HEK293T (cell line): ENCODE measurements at regions of chr5 and their contacts with region 1.

Region 1: DNA sequence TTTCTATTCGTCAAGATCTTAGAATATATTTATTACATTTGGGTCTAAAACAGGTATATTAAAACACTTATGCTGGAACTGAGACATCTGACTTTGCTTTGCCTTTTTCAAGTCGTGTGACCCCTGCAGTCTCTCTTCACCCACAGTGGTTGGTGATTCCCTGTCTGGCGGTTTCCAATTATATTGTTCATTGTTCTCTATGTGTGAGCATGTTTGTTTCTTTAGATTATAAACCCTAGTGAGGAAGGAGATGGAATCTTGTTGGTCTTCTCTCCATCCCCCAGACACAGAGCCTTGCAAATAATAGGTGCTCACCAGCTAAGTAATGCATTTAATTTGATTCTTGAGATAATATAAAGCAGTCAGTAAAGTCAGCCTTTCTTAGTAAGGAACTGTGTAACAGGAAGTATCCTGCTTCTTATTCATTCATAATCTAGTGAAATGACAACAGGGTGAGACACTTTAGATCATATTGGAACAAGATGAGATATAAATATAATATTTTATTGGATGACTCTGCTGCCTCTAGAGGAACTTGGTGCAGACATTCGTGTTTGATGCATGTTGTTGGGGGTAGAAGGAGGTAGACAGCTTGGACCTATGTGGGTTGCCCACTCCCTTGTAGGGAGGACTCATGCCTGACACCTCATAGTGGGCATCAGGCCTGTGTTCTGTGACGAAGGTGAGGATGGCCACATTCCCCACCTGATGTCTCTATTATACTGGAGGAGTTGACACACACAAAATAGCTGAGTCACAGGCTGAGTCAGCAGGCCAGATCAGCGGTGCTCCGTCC is 88.1 kb downstream of the FGF1 start:
- DNase-seq: peak; percentile 13

Region 2: DNA sequence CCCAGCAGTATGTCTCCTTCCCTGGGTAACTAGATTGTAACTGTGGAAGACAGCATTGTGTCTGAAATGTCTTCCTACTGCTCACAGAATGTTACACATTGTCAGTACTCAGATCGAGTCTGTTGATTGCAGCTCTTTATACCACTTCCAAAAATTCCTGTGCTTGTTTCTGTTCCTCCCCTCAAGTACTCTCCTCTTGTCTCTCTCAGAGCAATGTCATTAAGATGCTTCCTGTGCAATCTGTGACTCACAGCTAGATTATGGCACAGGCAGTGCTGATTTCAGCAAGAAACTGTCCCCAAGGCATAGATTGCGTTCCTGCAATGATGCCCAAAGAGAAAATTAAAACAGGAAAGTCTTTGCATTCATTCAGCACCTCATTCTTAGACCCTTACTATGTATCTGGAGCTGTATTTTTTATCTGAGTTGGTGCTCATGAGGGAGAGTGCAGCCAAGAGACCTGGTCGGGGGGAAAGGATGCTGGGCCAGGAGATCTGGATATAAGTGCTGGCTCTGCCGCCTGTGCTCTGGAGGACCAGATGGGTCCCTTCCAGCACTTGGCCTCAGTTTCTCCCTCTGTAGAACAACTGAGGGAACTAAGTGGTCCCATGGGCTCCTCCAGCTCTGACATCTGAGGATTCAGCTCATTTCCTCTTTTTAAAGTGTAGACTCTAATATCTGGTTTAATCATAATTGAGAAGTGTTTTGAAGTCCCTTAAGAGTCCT is 544.2 kb before region 1 on chr5:
- CTCF ChIA-PET with region 1: interaction called, 10 read pairs
- POLR2A ChIA-PET with region 1: no interaction called
- DNase-seq: no peak

Region 3: DNA sequence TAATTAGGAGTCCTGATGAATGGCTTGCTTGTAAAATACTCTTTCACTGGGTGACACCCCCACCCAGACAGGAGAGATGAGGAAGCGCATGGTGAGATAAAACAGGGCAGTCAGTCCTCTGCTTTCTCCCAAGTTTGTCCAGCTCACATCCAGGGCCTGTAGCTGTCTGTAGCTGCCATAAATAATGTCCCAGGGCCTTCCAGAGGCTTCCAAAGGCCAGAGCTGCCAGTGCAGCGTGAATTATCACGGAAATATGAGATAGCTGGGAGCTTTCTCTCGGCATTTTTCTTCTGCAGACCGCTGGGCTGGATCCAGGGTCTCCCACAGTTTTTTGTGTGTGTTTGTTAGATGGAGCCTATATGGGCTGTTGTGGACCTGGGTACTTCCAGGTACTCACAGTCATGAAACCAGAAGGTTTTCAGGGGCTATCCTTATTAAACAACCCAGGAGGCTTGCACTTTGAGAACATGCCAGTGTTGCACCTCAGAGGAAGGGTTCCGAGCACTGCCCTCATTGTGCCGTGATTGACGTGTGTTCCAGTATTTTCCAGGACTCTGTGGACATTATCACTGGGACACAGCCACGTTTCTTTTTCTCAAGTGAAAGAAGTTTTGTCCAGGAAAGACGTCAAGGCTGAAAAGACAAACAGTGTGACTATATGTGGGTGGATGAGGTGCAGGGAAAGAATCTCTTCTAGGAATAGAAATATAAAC is 29.3 kb before region 1 on chr5:
- CTCF ChIA-PET with region 1: no interaction called
- POLR2A ChIA-PET with region 1: no interaction called
- DNase-seq: no peak